HAP-1 (cell line): ENCODE measurements at regions of chr6 and their contacts with region 1.

Region 1: DNA sequence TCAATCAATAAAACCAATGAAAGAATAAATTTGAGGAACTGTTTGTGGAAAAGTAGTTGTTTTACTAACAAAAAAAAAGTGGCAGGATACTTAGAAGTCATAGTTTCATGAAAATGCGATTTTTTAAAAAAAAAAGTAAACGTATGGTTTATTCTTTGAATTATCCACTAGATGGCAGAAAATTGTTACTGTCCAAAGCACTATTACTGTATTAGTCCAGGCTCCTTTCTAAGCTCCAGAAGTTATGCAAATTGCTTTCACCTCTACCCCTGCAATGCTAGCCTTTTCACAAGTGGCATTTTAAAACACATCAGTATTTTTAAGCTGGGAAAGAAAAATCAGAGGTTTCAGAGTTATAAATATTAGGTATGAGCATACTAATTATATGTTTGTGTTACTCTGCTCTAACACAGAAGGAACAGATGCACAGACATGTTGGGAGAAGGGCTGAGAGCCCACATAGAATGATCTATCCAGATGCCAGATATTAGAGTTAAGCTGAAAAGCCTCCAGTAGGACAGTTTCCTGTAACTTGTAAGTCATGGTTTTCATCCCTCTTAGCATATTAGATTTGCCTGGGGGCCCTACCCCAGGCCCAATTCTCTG is 63.9 kb downstream of the FHL5 start:
- DNase-seq: peak in 1 of 2 experiments; percentile 83
- H3K4me3 ChIP-seq: no peak overlapping the region
- H3K4me1 ChIP-seq: no peaks in the 10 kb centered on the region
- H3K27me3 ChIP-seq: no peaks in the 10 kb centered on the region

Region 2: GRCh38 chr6:96897383-96898240 is 270.8 kb after region 1 on chr6 and contains the start of gene NDUFAF4:
- in situ Hi-C with region 1: loop called (anchors 25 kb)
- DNase-seq: peak; percentile 87 to 97
- H3K4me3 ChIP-seq: peak within 1 kb of the TSS; percentile 89
- H3K4me1 ChIP-seq: peaks cover 20% of the 10 kb centered on the region
- H3K27me3 ChIP-seq: no peaks in the 10 kb centered on the region

Region 3: DNA sequence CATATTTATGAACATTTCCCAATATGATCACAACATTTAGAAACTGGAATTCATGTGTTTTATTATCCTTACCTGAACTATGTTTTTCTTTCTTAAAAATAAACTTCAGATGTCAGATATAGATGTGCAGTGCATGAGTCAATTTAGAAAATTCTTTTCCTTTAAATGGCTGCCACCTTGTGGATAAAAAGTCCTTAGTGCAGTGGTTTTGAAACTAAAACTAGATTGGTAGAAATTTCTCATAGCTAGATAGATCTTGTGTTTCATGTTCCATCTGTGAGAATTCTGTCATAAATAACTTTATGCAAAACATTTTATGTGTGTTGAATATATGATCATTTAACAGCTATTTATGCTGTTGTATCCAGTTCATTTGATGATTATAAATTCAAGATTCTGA is 432.6 kb after region 1 on chr6:
- in situ Hi-C with region 1: loop called (anchors 10 kb)
- DNase-seq: peak in 1 of 2 experiments; percentile 39
- H3K4me3 ChIP-seq: no peak overlapping the region
- H3K4me1 ChIP-seq: no peaks in the 10 kb centered on the region
- H3K27me3 ChIP-seq: peaks cover 3% of the 10 kb centered on the region